Panc1 (cell line): ENCODE measurements at regions of chr5 and their contacts with region 1.

Region 1: GRCh38 chr5:159156426-159157238 is 52.7 kb downstream of the RNF145 start:
- DNase-seq: peak; percentile 32
- ATAC-seq: peak; percentile 91
- H3K4me3 ChIP-seq: no peak overlapping the region
- H3K27ac ChIP-seq: no peak overlapping the region
- H3K4me1 ChIP-seq: no peaks in the 10 kb centered on the region
- H3K27me3 ChIP-seq: no peaks in the 10 kb centered on the region
- CTCF ChIP-seq: peak; percentile 84

Region 2: DNA sequence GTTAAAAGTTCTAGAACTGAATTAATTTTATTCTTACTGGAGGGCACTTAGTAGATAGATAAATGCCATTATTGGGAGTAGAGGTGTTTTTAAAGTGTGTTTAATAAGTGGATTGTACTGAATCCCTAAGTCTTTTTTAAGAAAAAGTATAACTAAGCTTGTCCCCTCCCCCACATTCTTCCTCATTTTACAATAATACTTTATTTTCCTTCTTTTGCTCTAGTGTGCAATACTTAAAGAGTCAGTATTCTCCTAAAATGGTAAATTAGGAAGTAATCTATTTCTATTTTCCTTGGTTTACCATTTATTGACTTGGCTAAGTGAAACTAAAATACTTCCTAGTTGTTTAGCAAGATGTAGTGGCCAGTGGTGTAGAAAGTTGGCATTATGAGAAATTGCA is 118.0 kb after region 1 on chr5:
- CTCF ChIA-PET with region 1: interaction called, 5 read pairs
- POLR2A ChIA-PET with region 1: no interaction called
- in situ Hi-C with region 1: no loop called
- intact Hi-C with region 1: loop called (anchors 5 kb)
- DNase-seq: no peak
- ATAC-seq: no peak
- H3K4me3 ChIP-seq: no peak overlapping the region
- H3K27ac ChIP-seq: no peak overlapping the region
- H3K4me1 ChIP-seq: no peaks in the 10 kb centered on the region
- H3K27me3 ChIP-seq: no peaks in the 10 kb centered on the region
- CTCF ChIP-seq: no peak